Left cardiac atrium (tissue), 4 donors: ENCODE measurements at regions of chr7 and their contacts with region 1.

Region 1: DNA sequence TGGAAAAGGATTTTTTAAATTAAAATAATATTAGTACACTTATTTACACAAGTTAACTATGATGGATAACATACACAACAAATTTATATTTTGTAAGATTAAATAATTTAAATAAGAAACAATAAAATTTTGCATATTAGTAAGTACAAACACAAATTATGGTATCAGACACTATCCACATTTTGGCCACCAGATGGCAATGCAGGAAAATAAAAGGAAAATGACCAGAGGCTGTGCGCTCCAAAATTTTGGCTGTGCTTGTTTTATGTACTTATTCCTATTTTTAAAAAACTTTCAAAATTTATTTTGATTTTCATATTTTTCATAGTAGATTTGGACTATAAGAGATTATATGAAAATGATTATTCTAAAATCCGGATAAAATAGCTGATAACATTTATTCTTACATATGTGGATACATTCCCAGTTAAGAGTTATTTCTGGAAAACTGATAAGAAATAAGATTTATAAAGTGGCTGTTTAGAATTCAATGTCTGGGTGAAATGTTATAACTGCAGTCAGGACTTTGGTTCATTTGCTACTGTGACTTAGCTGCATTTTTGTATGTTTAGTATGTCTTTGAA is 274.7 kb upstream of the HGF start:
- DNase-seq: no peak
- ATAC-seq: peak in 1 of 2 donors; percentile 55

Region 2: DNA sequence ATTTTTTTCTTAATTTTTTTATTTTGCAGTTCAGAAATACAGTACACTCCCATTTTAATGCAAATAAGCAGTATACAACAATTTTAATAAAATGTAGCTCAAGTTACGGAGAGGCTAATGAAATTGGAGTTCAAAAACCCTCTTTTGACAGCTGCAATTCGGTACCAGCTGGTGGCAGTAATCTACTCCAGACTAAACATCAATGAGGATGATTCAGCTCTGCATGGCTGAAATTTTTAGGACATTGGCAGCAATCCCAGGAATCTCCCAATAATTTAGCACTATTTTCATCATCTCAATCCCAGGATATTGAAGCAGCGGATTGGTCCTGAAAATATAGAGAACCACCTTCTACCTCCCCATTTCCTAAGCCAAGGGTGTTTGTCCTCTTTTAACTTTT is 120.2 kb after region 1 on chr7:
- intact Hi-C with region 1: no loop called
- DNase-seq: no peak
- ATAC-seq: peak; percentile 80 to 82

Region 3: GRCh38 chr7:82481499-82482097 is 437.0 kb after region 1 on chr7:
- intact Hi-C with region 1: loop called in 1 of 2 experiments (anchors 5 kb)
- DNase-seq: no peak
- ATAC-seq: no peak

Region 4: DNA sequence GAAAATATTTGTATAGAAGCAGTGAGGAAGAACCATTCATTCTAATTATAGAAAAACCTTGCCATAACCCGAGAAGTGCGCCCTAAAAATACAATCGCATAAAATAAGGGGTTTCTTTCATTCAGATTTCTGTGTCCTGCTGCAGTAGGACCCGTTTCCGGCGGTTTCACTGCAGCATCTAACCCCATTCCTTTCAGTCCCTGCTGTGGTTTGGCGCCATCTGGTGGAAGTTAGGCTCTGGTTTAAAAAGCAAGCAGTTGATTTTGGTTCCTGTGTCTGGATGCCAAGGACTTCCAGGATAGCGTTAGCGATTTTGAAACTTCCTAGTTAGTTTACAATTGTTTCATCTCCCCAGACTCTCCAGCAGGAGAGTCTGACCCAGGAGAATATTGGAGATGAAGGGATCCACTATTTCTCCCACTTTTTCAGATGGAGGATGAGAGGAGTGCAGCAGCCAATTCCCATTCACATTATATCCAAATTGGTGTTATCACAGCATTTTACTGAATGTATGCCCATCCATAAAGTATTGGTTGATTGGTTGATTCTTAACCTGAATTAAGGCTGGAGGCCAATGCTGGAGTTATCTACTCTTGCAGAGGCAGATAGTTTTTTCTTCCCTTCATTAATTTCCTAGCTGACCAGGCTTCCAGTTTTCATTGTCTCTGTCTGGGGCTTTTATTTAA is 527.7 kb after region 1 on chr7:
- intact Hi-C with region 1: loop called (anchors 2 to 10 kb)
- DNase-seq: peak; percentile 90
- ATAC-seq: peak; percentile 88 to 96

Region 5: GRCh38 chr7:82729172-82730030 is 684.8 kb after region 1 on chr7:
- intact Hi-C with region 1: loop called in 1 of 2 experiments (anchors 5 kb)
- DNase-seq: no peak
- ATAC-seq: no peak